HEK293 (cell line): ENCODE measurements at regions of chr15 and their contacts with region 1.

Region 1: DNA sequence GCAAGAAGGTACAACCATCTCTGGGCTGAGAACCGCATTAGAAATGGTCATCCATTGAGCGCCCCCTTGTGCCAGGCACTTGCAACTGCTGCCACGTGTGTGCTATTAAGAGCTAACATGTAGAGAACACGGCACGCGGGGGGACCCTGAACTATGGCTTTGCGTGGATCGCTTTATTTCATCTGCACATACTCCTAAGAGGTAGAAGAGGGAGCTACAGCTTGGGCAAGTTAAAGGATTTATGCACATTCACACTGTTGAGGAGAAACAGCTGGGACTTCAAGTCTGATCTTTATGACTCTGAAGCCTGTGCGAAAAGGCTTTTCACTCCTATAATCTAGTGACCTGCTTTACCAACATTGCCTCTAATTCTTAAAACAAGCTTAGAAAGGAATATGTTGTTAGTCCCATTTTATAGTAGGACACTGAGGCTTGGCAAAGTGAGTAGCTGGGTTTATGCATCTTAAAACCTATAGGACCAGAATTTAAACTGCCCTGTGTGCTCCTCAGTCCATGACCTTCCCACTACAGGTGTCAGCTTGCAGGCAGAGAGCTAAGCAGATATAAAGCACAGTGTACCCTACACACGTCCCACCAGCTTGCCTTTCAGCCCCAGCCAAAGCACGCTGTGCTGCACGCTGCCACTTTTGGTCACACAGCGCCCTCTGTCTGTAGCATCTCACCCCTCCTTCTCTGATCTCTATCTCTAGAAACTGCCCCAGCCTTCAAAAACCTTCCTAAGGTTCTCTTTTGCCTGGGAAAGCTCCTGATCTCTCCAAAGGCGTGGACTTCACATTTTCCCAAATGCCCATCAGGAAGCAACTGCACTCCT is 57.8 kb downstream of the STARD5 start:
- H3K4me3 ChIP-seq: peak overlapping the region; percentile 4; the same call in 1 of the 2 replicates
- H3K27ac ChIP-seq: no peak overlapping the region
- H3K4me1 ChIP-seq: no peaks in the 10 kb centered on the region
- CTCF ChIP-seq: peak; percentile 86

Region 2: GRCh38 chr15:80776420-80777045 is 489.6 kb before region 1 on chr15:
- CTCF ChIA-PET with region 1: interaction called, 31 read pairs
- POLR2A ChIA-PET with region 1: no interaction called
- H3K4me3 ChIP-seq: no peak overlapping the region
- H3K27ac ChIP-seq: no peak overlapping the region
- H3K4me1 ChIP-seq: peaks cover 28% of the 10 kb centered on the region
- CTCF ChIP-seq: peak; percentile 58; the same call in 1 of the 2 replicates

Region 3: DNA sequence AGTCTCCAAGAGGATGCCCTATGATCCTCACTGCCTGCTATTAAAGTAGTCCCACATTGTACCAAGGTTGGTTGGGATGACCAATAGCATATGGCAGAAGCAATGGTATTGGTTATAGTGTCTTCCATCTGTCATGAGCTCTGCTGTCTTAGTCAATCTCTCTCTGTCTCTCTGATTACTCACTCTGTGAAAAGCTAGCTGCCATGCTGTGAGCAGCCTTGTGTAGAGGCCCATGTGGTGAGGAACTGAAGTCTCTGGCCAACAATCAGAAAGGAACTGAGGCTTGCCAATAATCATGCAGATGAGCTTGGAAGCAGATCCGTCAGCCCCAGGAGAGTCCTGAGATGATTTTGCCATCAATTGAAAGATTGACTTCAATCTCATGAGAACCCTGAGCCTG is 192.4 kb before region 1 on chr15:
- CTCF ChIA-PET with region 1: interaction called, 18 read pairs
- POLR2A ChIA-PET with region 1: no interaction called
- H3K4me3 ChIP-seq: no peak overlapping the region
- H3K27ac ChIP-seq: no peak overlapping the region
- H3K4me1 ChIP-seq: no peaks in the 10 kb centered on the region
- CTCF ChIP-seq: no peak

Region 4: GRCh38 chr15:81126892-81127291 is 139.3 kb before region 1 on chr15:
- CTCF ChIA-PET with region 1: interaction called, 18 read pairs
- POLR2A ChIA-PET with region 1: no interaction called
- H3K4me3 ChIP-seq: no peak overlapping the region
- H3K27ac ChIP-seq: no peak overlapping the region
- H3K4me1 ChIP-seq: peaks cover 6% of the 10 kb centered on the region
- CTCF ChIP-seq: no peak

Region 5: GRCh38 chr15:81195339-81195864 is 70.8 kb before region 1 on chr15:
- CTCF ChIA-PET with region 1: interaction called, 11 read pairs
- POLR2A ChIA-PET with region 1: no interaction called
- H3K4me3 ChIP-seq: no peak overlapping the region
- H3K27ac ChIP-seq: no peak overlapping the region
- H3K4me1 ChIP-seq: no peaks in the 10 kb centered on the region
- CTCF ChIP-seq: no peak

Region 6: DNA sequence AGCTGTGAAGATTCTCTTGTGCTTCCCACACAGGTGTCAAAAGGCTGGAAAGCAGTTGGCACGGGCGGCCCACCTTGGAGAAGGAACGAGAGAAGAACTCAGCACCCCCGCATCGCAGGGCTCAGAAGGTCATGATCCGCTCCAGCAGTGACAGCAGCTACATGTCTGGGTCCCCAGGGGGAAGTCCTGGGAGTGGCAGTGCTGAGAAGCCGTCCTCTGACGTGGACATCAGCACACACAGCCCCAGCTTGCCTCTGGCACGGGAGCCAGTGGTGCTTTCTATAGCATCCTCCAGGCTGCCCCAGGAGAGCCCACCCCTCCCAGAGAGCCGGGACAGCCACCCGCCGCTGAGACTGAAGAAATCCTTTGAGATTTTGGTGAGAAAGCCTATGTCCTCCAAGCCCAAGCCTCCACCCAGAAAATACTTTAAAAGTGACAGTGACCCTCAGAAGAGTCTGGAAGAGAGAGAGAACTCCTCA is 26.4 kb after region 1 on chr15:
- CTCF ChIA-PET with region 1: interaction called, 15 read pairs
- POLR2A ChIA-PET with region 1: no interaction called
- H3K4me3 ChIP-seq: no peak overlapping the region
- H3K27ac ChIP-seq: no peak overlapping the region
- H3K4me1 ChIP-seq: no peaks in the 10 kb centered on the region
- CTCF ChIP-seq: no peak

Region 7: DNA sequence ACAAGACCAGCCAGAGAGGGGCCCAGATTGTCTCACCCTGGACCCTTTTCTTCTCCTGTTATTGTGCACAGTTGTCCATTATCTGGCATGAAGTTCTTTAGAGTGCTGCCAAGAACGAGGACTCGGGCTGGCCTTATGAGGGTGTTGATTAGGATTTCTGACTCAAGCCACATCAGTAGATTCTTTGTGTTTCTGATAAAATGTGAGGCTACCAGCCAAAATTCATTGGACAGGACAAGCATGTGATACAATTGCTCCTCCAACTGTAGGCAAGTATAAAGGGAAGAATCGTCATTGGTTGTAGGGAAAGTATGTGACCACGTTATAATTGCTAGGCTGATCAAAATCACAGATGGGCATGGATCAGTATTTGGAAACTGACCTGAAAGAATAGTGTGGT is 207.0 kb after region 1 on chr15:
- CTCF ChIA-PET with region 1: no interaction called
- POLR2A ChIA-PET with region 1: no interaction called
- H3K4me3 ChIP-seq: no peak overlapping the region
- H3K27ac ChIP-seq: no peak overlapping the region
- H3K4me1 ChIP-seq: no peaks in the 10 kb centered on the region
- CTCF ChIP-seq: no peak

Region 8: DNA sequence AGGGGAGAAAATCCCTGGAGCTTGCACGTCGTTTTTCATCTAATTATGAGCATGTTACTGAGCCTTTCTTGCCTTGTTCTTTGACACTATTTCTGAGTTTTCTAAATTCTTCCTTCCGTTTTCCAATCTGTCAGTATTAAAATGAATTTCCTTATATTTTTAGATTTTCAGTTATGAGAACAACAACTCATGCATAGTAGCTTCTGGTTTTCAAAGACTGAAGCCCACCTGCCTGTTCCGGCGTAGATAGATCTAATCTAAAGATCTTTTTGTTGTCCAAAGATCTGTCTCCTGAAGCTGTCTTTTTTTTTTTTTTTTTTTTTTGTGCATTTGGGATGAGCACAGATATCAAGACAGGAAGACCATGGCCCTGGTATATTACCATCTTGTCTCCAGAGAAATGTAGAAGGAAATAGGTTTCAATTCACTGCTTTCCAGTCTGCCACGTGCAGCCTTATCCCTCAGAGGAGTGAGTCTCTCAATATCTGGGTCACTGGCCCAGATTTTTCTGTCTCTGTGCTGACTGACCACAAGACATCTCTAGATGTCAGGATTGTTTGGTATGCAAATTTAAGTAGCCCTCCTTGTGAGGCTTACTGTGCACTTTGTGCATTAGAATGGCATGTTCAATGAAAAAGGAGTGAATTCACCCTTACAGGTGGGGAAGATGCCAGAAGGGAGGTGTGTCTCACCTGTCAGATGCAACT is 330.2 kb after region 1 on chr15:
- CTCF ChIA-PET with region 1: no interaction called
- POLR2A ChIA-PET with region 1: no interaction called
- H3K4me3 ChIP-seq: no peak overlapping the region
- H3K27ac ChIP-seq: no peak overlapping the region
- H3K4me1 ChIP-seq: no peaks in the 10 kb centered on the region
- CTCF ChIP-seq: no peak

Region 9: DNA sequence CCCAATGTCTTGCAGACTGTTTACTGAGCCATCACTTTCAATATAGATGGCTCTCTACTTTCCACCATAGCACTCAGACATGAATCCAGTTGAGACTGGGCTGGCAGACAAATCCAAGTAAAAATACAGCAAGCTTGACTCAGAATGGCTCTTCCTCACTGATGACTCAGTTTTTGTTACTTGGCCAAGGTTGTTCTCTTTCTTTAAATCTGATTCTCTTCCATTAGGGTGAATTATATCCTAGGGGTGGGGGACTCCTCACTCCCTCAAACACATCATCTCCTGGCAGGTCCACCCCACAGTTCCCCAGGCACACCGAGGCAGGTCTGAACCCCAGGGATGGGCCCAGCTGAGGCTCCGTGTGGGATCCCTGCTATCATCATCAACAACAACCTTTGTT is 621.8 kb after region 1 on chr15:
- CTCF ChIA-PET with region 1: no interaction called
- POLR2A ChIA-PET with region 1: no interaction called
- H3K4me3 ChIP-seq: no peak overlapping the region
- H3K27ac ChIP-seq: no peak overlapping the region
- H3K4me1 ChIP-seq: peaks cover 20% of the 10 kb centered on the region
- CTCF ChIP-seq: no peak

Region 10: GRCh38 chr15:81901319-81901718 is 635.2 kb after region 1 on chr15:
- CTCF ChIA-PET with region 1: no interaction called
- POLR2A ChIA-PET with region 1: no interaction called
- H3K4me3 ChIP-seq: no peak overlapping the region
- H3K27ac ChIP-seq: no peak overlapping the region
- H3K4me1 ChIP-seq: 0 out of 2 replicates have a peak, but pooled peaks cover 3% of the 10 kb centered on the region
- CTCF ChIP-seq: no peak